Left cardiac atrium (tissue), 4 donors: ENCODE measurements at regions of chr11 and their contacts with region 1.

Region 1: GRCh38 chr11:9757809-9758636 is 94.1 kb downstream of the SWAP70 start:
- DNase-seq: peak; percentile 92
- ATAC-seq: peak; percentile 71 to 79

Region 2: GRCh38 chr11:9613118-9613829 is 144.7 kb before region 1 on chr11:
- intact Hi-C with region 1: loop called in 1 of 2 experiments (anchors 10 kb)
- DNase-seq: peak; percentile 93
- ATAC-seq: peak; percentile 91

Region 3: DNA sequence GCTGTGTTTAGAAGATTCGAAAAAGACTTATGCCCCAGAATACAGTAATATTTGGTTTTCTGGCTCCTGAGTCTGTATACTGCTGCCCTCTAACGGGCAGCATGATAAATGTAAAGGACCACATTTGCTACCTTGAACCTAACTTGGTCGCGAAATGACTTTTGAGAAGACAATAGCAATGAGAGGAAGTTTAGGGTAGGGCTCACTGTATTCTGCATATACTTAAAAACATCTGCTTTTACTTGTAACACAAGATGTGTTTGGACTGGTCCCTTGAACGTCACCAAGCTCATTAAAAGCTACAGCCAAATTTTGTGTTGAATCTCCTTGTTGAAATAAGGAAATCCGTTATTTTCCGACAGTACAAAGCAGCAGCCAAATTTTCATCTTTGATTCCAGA is 215.0 kb after region 1 on chr11:
- intact Hi-C with region 1: loop called (anchors 1 to 10 kb)
- DNase-seq: no peak
- ATAC-seq: peak; percentile 78

Region 4: GRCh38 chr11:10307442-10308207 is 549.6 kb after region 1 on chr11:
- intact Hi-C with region 1: loop called in 1 of 2 experiments (anchors 2 kb)
- DNase-seq: peak; percentile 86
- ATAC-seq: peak; percentile 60 to 68

Region 5: GRCh38 chr11:10322830-10323792 is 565.1 kb after region 1 on chr11:
- intact Hi-C with region 1: loop called (anchors 1 to 5 kb)
- DNase-seq: peak; percentile 58
- ATAC-seq: peak; percentile 30 to 68